Sigmoid colon (tissue), 7 donors: ENCODE measurements at regions of chr18 and their contacts with region 1.

Region 1: GRCh38 chr18:44733069-44733753 is 52.5 kb downstream of the SETBP1 start:
- DNase-seq: no peak
- H3K4me3 ChIP-seq: no peak overlapping the region
- H3K27ac ChIP-seq: peak overlapping the region in 3 of 4 donors; percentile 43 to 82 (median 81)
- H3K4me1 ChIP-seq: peaks cover 0 to 86% (median 70%) of the 10 kb centered on the region in 4 donors
- H3K27me3 ChIP-seq: no peaks in the 10 kb centered on the region
- CTCF ChIP-seq: no peak
- EP300 ChIP-seq: no peak
- POLR2A ChIP-seq: no peak

Region 2: DNA sequence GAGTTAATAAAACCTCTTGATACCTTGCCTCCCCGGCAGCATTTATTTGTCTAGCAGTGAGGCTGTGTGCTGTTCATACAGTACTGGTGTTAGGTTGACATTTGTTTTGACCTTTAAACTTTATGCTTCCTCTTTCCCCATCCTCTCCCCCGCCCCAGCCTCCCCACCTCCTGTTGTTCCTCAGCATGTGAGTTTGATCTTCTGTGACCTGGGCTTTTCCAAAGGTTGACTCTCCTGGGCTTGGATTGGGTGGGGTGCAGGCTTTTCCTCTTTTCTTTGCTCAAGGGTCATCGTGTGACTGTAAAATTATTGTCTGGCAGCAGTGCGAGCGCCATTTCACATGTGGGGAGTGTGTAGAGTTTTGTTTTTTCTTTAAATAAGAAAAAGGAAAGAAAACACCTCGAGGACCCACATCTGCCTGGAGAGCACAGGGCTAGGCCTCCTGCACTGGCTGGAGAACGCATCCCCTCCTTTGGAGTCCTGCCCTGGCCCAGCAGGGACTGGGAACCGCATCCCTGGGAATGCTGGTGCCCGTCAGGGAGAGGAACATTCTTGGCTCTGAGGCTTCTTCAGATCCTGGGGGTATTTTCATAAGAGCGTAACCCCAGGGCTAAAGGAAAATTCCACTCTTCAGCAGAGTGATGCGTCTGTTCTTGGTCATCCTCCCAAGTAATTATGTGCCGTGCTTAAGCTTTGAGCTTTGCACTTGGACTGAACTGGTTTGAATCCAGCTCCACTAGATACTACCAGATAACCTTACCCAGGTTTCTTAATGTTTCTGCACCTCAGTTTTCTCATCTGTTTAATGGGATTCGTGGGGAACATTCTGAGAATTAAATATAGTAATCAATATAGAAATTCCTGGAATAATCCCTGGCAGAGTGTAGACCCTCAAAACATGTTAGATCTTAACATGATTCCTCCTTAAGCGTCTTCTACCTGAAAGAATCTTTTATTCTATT is 39.0 kb after region 1 on chr18:
- intact Hi-C with region 1: loop called (anchors 5 kb)
- DNase-seq: peak; percentile 74
- H3K4me3 ChIP-seq: no peak overlapping the region
- H3K27ac ChIP-seq: peak overlapping the region; percentile 30 to 78 (median 69)
- H3K4me1 ChIP-seq: peaks cover 0 to 78% (median 57%) of the 10 kb centered on the region in 4 donors
- H3K27me3 ChIP-seq: no peaks in the 10 kb centered on the region
- CTCF ChIP-seq: no peak
- EP300 ChIP-seq: no peak
- POLR2A ChIP-seq: no peak

Region 3: GRCh38 chr18:44789710-44790109 is 56.5 kb after region 1 on chr18:
- intact Hi-C with region 1: loop called (anchors 5 kb)
- DNase-seq: no peak
- H3K4me3 ChIP-seq: peak overlapping the region in 1 of 4 donors; percentile 2
- H3K27ac ChIP-seq: peak overlapping the region; percentile 80 to 89 (median 84)
- H3K4me1 ChIP-seq: peaks cover 0 to 92% (median 79%) of the 10 kb centered on the region in 4 donors
- H3K27me3 ChIP-seq: no peaks in the 10 kb centered on the region
- CTCF ChIP-seq: no peak
- EP300 ChIP-seq: no peak
- POLR2A ChIP-seq: no peak

Region 4: DNA sequence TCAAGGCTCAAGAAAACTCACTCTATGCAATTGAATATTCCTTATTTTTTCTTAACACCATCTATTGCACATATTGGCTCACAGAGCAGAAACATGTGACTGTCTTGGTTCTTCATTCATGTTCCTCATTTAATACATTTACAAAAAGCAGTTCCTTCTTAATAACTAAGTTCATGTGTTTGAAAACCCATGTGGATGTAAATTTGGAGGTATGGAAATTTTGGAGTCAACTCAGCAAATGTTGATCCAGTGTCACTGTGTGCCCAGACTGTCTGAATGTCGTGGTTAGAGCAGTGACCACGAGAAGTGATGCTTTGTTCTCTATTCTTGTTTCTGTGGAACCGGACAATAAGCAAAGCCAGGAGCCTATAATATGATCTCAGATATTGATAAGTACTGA is 246.5 kb after region 1 on chr18:
- intact Hi-C with region 1: no loop called
- DNase-seq: no peak
- H3K4me3 ChIP-seq: no peak overlapping the region
- H3K27ac ChIP-seq: no peak overlapping the region
- H3K4me1 ChIP-seq: peaks cover 0 to 3% (median under 1%) of the 10 kb centered on the region in 4 donors
- H3K27me3 ChIP-seq: no peaks in the 10 kb centered on the region
- CTCF ChIP-seq: no peak
- EP300 ChIP-seq: no peak
- POLR2A ChIP-seq: no peak